Posterior vena cava (tissue), 2 donors: ENCODE measurements at regions of chr16 and their contacts with region 1.

Region 1: GRCh38 chr16:56068314-56068713 is 123.0 kb upstream of the GNAO1 start:
- DNase-seq: no peak

Region 2: DNA sequence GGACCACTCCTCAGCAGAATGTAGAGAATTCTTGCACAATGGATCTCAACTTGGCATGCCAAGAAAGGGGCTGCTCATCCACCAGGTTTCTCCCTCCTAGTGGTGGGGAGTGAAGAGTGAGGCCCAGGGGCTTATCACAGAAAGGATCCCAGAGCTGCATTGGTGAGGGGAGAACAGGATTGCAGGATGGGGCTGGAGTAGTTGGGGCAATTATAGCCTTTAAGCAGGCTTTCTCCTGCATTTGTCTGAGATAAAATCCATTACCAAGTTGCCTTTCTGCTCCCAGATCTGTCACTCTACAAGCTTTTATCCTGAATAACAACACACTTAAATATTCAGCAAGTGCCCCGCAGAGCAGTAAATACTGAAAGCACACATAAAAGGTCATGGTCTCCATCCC is 62.4 kb before region 1 on chr16:
- intact Hi-C with region 1: loop called in 1 of 2 experiments (anchors 2 kb)
- DNase-seq: no peak